ENCODE measurements at regions of chr12 and their contacts with region 1.

Region 1: GRCh38 chr12:66035288-66035966 is 95.1 kb downstream of the LLPH start:
- DNase-seq: no peak
- H3K4me3 ChIP-seq: no peak overlapping the region
- CTCF ChIP-seq: peak; percentile 35

Region 2: DNA sequence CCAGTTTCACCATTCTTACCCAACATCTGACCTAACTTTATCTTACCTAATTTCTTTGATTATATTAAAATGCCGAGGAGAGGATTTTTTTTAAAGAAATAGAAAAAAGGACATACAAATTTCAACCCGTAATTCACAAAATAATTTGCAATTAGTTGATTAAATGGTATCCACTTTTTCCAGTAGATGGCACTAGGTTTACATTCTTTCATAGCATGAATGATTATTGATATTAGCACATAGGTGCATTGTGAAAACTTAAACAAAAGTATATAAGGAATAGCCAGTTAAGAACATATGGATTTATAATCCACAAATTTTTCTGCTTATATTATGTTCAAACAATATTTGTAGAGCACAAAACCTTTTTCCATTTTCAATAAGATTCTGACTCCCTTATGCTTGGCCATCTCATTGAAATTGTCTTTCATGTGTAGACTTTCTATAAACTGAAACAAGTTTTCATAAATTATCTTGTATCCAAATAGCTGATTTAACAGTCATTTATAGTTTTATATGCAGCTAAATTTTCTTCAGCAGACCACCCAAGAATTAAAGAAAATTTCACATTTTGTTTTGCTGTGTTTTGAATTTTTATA is 721.6 kb before region 1 on chr12:
- CTCF ChIA-PET with region 1: interaction called, 10 read pairs
- POLR2A ChIA-PET with region 1: no interaction called
- DNase-seq: no peak
- H3K4me3 ChIP-seq: no peak overlapping the region
- CTCF ChIP-seq: peak; percentile 11

Region 3: GRCh38 chr12:65902500-65902899 is 132.9 kb before region 1 on chr12:
- CTCF ChIA-PET with region 1: interaction called, 10 read pairs
- POLR2A ChIA-PET with region 1: no interaction called
- DNase-seq: no peak
- H3K4me3 ChIP-seq: no peak overlapping the region
- CTCF ChIP-seq: no peak

Region 4: GRCh38 chr12:66017736-66018135 is 17.7 kb before region 1 on chr12:
- CTCF ChIA-PET with region 1: interaction called, 29 read pairs
- POLR2A ChIA-PET with region 1: no interaction called
- DNase-seq: no peak
- H3K4me3 ChIP-seq: no peak overlapping the region
- CTCF ChIP-seq: no peak

Region 5: DNA sequence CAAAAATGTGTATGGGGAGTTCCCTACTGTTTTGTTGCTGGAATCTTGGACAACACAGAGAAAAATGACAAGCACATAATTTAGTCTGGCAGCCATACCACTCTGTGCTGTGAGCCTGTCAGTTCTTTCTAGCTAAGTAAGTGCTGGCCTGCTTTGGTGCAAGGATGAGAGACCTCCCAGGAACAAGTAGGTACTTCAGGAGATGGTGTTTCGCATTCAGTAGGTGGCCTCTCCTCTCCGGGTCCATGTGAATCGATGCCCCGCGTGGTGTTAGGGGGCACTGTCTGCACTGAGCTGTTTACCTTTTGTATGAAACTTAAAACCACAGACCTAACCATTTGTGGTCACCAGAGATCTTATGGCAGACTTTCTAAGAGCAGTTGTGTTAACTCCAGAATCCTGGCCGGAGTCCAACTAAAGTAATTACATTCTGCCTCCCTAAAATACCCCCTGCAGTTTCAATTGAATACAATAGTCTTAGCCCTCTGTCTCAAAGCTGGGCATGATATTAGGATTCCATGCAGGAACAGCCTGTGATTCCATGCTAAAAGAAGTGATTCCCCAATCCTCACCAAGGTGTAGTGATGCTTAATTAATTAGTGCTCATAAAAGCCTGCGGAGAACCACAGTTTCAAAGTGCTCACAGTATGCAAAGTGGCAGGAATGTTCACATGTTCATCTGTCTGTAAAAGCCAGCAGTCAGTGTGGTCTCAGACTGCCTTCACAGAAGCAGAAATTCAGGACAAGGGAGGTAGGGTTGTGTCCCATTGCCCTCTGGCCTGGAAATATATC is 30.9 kb after region 1 on chr12:
- CTCF ChIA-PET with region 1: interaction called, 10 read pairs
- POLR2A ChIA-PET with region 1: no interaction called
- DNase-seq: peak; percentile 23
- H3K4me3 ChIP-seq: no peak overlapping the region
- CTCF ChIP-seq: peak; percentile 5

Region 6: GRCh38 chr12:66087365-66087943 is 52.0 kb after region 1 on chr12:
- CTCF ChIA-PET with region 1: interaction called, 12 read pairs
- POLR2A ChIA-PET with region 1: no interaction called
- DNase-seq: no peak
- H3K4me3 ChIP-seq: no peak overlapping the region
- CTCF ChIP-seq: peak; percentile 65

Region 7: DNA sequence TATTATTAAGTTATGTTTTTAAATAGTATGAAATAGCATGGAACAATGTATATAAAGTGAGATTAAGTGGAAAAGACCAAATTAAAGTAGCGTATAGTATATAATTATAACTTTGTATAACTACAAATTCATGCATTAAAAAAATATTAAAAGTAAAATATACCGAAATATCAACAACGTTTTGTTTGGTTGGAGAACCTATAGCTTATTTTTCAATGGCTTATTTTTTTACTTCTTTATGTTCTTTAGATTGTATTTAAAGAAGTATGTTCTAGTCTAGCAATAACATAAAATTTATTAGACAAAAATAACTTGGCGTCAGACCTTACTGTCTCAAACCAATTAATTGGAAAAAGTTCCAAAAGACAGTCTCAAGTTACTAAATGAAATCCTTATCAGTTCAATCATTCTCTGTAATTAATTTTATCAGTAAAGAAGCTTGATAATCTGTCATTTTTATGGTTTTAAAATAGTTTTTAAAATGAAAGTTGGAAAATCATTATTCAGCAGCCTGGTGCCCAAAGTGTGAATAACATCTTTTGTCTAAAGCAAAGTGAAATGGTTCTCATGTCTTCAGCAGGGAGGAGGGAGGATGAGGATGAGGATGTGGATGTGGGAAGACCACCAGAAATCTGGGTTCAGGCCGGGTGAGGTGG is 200.3 kb after region 1 on chr12:
- CTCF ChIA-PET with region 1: no interaction called
- POLR2A ChIA-PET with region 1: no interaction called
- DNase-seq: no peak
- H3K4me3 ChIP-seq: peak overlapping the region; percentile 52
- CTCF ChIP-seq: no peak